Spleen (tissue), 13 donors: ENCODE measurements at regions of chr3 and their contacts with region 1.

Region 1: DNA sequence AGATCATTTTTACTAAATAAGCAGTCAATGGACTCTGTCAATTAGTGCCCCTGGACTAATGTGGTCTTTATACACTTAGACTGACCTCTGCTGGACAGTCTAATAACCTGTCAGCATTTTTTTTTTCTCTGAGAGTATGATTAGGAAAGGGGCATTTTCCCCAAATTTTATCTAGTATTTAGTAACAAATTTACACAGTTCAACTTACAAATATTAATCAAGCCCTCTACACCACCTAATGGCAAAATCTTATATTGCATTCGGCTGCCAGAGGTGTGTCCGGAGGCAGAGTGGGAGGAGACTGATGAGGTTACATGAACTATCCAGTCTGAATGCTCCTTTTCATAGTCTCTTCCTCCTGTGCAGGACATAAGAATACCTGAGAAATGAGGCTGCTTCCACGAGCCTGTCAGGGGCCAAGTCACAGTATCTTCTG is 36.0 kb upstream of the COLQ start:
- DNase-seq: no peak
- H3K4me3 ChIP-seq: no peak overlapping the region
- H3K27ac ChIP-seq: peak overlapping the region in 3 of 8 donors; percentile 66 to 77 (median 69)
- H3K4me1 ChIP-seq: peaks cover 12 to 29% (median 21%) of the 10 kb centered on the region in 6 donors
- H3K27me3 ChIP-seq: no peaks in the 10 kb centered on the region
- CTCF ChIP-seq: peak; percentile 55 to 85 (median 69)
- POLR2A ChIP-seq: no peak

Region 2: DNA sequence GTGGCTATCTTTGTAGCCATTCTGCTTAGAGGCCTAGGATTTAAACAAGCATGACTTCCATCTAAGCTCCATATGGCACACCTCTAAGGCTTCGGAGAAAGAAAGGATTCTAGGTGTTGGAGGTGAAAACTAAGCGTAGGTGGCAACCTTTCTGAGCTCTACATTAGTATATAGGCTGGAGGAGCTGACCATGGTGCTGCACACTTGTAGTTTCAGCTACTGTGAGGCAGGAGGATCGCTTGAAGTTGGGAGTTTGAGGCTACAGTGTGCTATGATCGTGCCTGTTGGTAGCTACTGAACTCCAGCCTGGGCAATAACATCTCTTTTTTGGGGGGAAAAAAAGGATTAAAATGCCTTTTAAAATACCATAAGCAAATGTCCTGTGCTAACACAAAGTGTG is 122.8 kb before region 1 on chr3:
- intact Hi-C with region 1: loop called (anchors 5 kb)
- DNase-seq: no peak
- H3K4me3 ChIP-seq: no peak overlapping the region
- H3K27ac ChIP-seq: no peak overlapping the region
- H3K4me1 ChIP-seq: peaks cover 3 to 37% (median 11%) of the 10 kb centered on the region in 6 donors
- H3K27me3 ChIP-seq: no peaks in the 10 kb centered on the region
- CTCF ChIP-seq: no peak
- POLR2A ChIP-seq: no peak